Activated CD8-positive, alpha-beta T cell treated with anti-CD3 and anti-CD28 coated beads for 36 hours (primary cell): ENCODE measurements at regions of chr5 and their contacts with region 1.

Region 1: GRCh38 chr5:43484106-43484849 is 613 bp upstream of the TMEM267 start:
- DNase-seq: peak; percentile 93
- ATAC-seq: peak; percentile 71
- H3K4me3 Mint-ChIP-seq: peak overlapping the region; percentile 91
- H3K27ac Mint-ChIP-seq: peak overlapping the region; percentile 100
- H3K4me1 Mint-ChIP-seq: peaks cover 42% of the 10 kb centered on the region
- H3K27me3 Mint-ChIP-seq: no peaks in the 10 kb centered on the region
- CTCF ChIP-seq: peak; percentile 67

Region 2: DNA sequence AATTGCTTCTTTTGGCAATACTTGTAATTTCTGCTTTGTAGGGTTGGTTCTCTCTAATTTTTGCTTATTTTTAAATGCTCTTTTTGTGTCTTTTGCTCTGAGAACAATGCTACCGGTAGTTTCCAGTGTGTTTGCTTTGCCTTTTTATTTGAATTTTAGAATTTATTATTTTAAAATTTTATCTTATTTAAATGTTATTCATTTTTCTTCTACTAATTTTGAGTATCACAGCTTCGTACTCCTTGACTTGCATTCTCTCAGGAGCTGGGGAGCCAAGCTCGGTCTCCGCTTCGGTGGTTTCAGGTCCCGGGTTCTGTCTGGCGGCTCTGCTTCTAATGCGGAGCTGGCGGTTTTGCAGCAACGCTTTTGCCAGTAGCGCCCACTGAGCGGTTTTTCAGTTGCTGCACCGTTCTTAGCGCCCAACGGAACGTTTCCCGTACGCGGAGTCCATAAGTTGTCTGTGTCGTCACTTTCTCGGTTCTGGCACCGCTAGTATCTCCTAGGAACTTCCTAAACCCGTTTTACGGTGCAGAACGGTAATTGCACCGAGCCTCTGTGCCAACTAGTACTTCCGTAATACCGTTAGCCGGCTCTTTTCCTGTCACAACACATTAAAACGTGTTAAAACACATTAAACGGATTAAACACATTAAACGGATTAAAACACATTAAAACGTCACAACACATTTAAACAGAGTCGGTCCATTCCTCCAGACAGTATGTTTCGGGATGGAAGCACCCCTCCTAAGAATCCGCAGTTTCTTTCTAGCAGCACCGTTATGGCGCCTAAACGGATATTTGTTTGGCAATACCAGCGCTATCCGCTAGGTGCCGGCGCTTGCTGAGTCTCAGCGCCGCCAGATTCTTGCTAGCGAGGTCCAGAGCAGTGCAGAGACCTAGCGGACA is 489.8 kb before region 1 on chr5:
- CTCF ChIA-PET with region 1: interaction called, 3 read pairs
- POLR2A ChIA-PET with region 1: interaction called, 4 read pairs
- intact Hi-C with region 1: loop called (anchors 10 kb)
- DNase-seq: peak; percentile 94
- ATAC-seq: peak; percentile 70
- H3K4me3 Mint-ChIP-seq: peak overlapping the region; percentile 90
- H3K27ac Mint-ChIP-seq: peak overlapping the region; percentile 99
- H3K4me1 Mint-ChIP-seq: peaks cover 20% of the 10 kb centered on the region
- H3K27me3 Mint-ChIP-seq: no peaks in the 10 kb centered on the region
- CTCF ChIP-seq: peak; percentile 85

Region 3: GRCh38 chr5:43313035-43313853 is 171.0 kb before region 1 on chr5 and contains the start of gene HMGCS1:
- CTCF ChIA-PET with region 1: interaction called, 6 read pairs
- POLR2A ChIA-PET with region 1: interaction called, 23 read pairs
- intact Hi-C with region 1: loop called (anchors 10 kb)
- DNase-seq: peak; percentile 99
- ATAC-seq: peak; percentile 90
- H3K4me3 Mint-ChIP-seq: peak within 1 kb of the TSS; percentile 98
- H3K27ac Mint-ChIP-seq: peak within 1 kb of the TSS; percentile 98
- H3K4me1 Mint-ChIP-seq: peaks cover 62% of the 10 kb centered on the region
- H3K27me3 Mint-ChIP-seq: no peaks in the 10 kb centered on the region
- CTCF ChIP-seq: no peak
- total RNA-seq, gene HMGCS1: 63.6 to 65.7 TPM

Region 4: DNA sequence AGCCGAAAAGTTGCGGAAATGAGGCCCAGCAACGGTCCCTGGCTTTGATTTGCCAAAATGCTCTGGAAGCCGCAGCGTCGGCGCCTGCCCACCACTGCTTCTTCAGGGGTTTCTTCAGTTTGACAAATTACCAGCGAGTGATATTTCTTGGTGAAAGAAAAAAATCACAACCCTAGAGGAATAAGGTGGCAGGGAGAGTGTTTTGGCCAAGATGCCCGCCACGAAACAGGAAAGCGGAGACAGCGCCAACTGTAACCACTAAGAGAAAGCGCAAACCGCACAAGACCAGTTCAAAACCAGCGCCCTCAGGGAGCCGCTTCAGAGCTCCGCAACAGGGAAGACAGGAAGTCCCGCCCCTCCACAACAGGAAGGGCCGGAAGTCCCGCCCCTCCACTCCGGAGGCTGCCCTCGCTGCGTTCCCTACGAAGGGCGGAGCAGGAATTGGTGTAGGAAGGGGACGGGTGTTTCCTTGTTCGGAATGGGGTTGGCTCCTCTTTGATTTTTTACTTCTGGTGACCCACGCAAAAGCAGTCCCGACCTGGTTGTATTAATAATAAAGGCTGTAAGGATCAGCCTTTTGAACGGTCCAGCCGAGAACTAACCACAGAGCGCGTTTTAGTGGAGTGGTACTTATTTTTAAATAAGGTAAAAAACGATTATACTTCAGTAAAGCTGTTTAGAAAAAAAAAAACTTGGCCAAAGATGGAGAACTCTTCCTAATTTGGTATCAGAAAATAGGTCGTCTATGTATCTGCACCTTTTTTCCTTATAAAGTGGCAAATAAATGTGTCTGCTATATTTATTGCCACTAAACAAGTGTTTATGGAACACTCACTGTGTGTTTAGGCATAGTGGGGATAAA is 30.8 kb after region 1 on chr5 and contains the start of gene C5orf34:
- CTCF ChIA-PET with region 1: interaction called, 18 read pairs
- POLR2A ChIA-PET with region 1: interaction called, 13 read pairs
- intact Hi-C with region 1: no loop called
- DNase-seq: peak; percentile 95
- ATAC-seq: peak; percentile 96
- H3K4me3 Mint-ChIP-seq: peak within 1 kb of the TSS; percentile 85
- H3K27ac Mint-ChIP-seq: peak within 1 kb of the TSS; percentile 97
- H3K4me1 Mint-ChIP-seq: peaks cover 25% of the 10 kb centered on the region
- H3K27me3 Mint-ChIP-seq: no peaks in the 10 kb centered on the region
- CTCF ChIP-seq: no peak
- total RNA-seq, gene C5orf34: 9.1 to 10.5 TPM

Region 5: GRCh38 chr5:43602461-43603343 is 118.4 kb after region 1 on chr5 and contains the start of gene NNT:
- CTCF ChIA-PET with region 1: interaction called, 14 read pairs
- POLR2A ChIA-PET with region 1: interaction called, 22 read pairs
- intact Hi-C with region 1: no loop called
- DNase-seq: peak; percentile 84
- ATAC-seq: peak; percentile 72
- H3K4me3 Mint-ChIP-seq: peak within 1 kb of the TSS; percentile 86
- H3K27ac Mint-ChIP-seq: peak within 1 kb of the TSS; percentile 87
- H3K4me1 Mint-ChIP-seq: peaks cover 38% of the 10 kb centered on the region
- H3K27me3 Mint-ChIP-seq: no peaks in the 10 kb centered on the region
- CTCF ChIP-seq: no peak
- total RNA-seq, gene NNT: 72.0 to 78.4 TPM